ENCODE measurements at regions of chr2 and their contacts with region 1.

Region 1: GRCh38 chr2:218229239-218229638 is 12.2 kb downstream of the ARPC2 start:
- DNase-seq: peak; percentile 71
- H3K4me3 Mint-ChIP-seq: peak overlapping the region; percentile 37
- H3K27ac Mint-ChIP-seq: peak overlapping the region; percentile 86
- H3K4me1 Mint-ChIP-seq: peaks cover 75% of the 10 kb centered on the region
- H3K27me3 Mint-ChIP-seq: no peaks in the 10 kb centered on the region

Region 2: GRCh38 chr2:217947383-217948350 is 281.6 kb before region 1 on chr2:
- CTCF ChIA-PET with region 1: no interaction called
- POLR2A ChIA-PET with region 1: no interaction called
- DNase-seq: no peak
- H3K4me3 Mint-ChIP-seq: no peak overlapping the region
- H3K27ac Mint-ChIP-seq: peak overlapping the region; percentile 51
- H3K4me1 Mint-ChIP-seq: peaks cover 52% of the 10 kb centered on the region
- H3K27me3 Mint-ChIP-seq: peaks cover 20% of the 10 kb centered on the region

Region 3: DNA sequence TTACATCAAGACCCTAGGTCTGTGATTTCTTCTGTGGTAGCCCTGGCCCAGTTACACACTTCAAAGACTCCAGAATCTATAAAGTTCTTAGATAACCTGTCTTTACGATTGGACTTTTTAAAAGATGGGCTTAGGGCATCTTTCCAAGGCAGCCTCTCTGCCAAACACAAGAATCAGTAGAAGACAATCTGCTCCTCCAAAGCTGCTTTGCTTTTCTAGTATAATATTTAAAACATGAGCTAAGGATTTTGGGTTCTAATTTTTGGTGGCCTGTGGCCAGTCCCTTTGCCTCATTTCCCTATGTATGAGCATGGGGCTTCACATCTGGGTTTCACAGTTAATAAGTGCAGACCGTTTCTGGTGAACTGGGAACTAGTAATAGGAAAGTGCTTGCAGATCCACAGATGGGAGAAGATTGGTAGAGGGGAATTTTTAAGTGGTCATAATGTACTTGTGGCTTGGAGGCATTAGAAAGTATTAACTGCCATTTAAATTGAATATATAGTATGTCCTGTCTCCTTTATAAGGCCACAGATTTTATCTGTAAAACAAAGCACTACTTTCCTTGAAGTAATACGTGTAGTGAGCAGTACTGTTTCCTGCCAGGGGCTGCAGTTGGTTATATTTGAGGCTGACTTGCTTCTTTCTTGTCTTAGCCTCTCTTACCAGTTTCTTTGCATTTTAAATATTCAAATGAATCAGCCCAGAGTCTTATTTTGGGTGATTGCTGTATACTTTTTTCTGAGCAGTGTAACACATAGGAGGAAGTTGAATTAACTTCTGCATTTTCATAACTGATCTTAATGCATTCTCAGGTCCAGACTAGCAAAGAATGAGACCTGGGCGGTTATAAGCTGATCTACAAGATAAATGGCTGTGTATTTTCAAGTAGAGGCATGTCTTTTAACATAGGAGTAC is 10.7 kb before region 1 on chr2:
- CTCF ChIA-PET with region 1: interaction called, 17 read pairs
- POLR2A ChIA-PET with region 1: interaction called, 7 read pairs
- DNase-seq: peak; percentile 47
- H3K4me3 Mint-ChIP-seq: peak overlapping the region; percentile 100
- H3K27ac Mint-ChIP-seq: peak overlapping the region; percentile 94
- H3K4me1 Mint-ChIP-seq: peaks cover 59% of the 10 kb centered on the region
- H3K27me3 Mint-ChIP-seq: no peaks in the 10 kb centered on the region

Region 4: GRCh38 chr2:218245214-218245613 is 16.0 kb after region 1 on chr2:
- CTCF ChIA-PET with region 1: interaction called, 13 read pairs
- POLR2A ChIA-PET with region 1: interaction called, 5 read pairs
- DNase-seq: no peak
- H3K4me3 Mint-ChIP-seq: no peak overlapping the region
- H3K27ac Mint-ChIP-seq: no peak overlapping the region
- H3K4me1 Mint-ChIP-seq: peaks cover 16% of the 10 kb centered on the region
- H3K27me3 Mint-ChIP-seq: no peaks in the 10 kb centered on the region